CD8-positive, alpha-beta memory T cell (primary cell): ENCODE measurements at regions of chr12 and their contacts with region 1.

Region 1: DNA sequence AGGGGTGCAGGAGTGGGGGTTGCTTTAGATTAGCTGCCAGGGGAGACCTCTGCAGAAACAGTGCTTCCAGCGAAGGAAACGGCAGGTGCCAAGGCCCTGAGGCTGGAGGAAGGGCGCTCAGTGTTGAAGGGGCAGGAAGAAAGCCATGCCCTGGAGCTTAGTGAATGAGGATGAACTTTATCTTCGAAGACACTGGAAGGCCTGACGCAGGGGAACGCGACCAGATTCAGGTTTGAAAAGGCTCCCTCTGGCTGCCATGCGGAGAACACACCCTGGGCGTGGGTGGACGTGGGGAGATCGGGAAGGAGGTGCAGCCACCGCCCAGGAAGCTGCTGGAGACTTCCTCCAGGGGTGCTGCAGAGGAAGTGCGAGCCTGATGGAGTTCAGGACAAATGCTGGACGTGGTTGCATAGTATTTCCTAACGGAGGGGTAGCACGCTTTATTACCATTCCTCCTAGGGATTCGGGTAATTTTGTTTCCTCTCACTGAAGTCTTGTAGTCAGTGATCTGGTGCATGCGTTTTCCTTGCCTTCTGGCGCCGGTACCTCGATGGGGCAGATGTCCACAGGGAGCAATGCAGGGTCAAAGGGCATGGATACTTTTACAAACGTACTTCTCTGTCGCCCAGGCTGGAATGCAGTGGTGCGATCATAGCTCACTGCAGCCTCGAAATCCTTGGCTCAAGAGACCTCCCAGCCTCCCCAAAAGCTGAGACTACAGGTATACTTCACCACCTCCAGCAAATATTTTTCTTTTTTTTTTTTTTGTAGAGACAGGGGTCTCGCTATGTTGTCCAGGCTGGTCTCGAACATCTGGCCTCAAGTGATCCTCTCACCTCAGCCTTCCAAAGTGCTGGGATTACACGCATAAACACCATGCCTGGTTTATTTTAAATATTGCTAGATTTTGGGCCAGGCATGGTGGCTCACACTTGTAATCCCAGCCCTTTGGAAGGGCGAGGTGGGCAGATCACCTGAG is 26.4 kb upstream of the UBC start:
- DNase-seq: peak; percentile 71 to 88 (median 74)
- H3K4me3 ChIP-seq: peak overlapping the region; percentile 72
- H3K4me3 Mint-ChIP-seq: no peak overlapping the region
- H3K27ac ChIP-seq: peak overlapping the region; percentile 80
- H3K27ac Mint-ChIP-seq: no peak overlapping the region
- H3K4me1 ChIP-seq: peaks cover 24% of the 10 kb centered on the region
- H3K4me1 Mint-ChIP-seq: peaks cover 0 to 8% (median 4%) of the 10 kb centered on the region in 3 donors
- H3K27me3 ChIP-seq: no peaks in the 10 kb centered on the region
- H3K27me3 Mint-ChIP-seq: no peaks in the 10 kb centered on the region

Region 2: DNA sequence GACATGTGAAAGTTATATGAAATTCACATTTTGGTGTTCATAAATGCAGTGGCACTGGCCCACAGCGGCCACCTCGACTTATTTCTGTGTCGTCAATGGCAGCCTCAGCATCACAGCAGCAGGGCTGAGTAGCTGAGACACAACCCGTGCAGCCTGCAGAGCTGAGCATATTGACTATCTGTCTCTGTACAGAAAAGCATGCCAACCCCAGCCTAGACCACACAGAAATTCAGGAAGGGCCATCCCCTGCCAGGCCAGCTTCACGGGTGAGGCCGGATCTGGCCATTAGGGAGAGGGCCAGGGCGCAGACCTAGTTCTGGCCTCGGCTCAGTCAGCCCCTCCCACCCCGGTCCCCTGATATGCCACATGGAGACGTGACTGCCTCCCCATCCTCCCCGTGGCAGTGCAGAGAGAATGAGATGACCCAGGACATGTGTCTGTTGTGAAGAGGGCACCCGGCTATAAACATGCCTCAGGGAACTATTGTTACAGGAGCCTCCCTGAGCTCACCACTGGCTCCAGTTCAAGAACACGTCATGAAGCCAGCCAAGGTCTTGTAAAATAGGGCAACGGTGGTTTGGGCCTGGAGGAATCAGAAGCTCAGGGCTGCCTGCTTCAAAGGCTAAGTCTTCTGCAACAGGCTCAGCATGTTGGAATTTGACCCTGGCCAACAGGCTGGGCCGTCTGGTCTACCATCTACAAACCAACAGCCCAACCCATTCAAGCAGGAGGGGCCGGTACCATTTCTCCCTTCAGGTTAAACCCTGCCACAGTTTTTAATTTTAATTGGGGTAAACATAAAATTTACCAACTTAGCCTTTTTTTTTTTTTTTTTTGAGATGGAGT is 102.7 kb before region 1 on chr12:
- CTCF ChIA-PET with region 1: no interaction called
- POLR2A ChIA-PET with region 1: no interaction called
- DNase-seq: no peak
- H3K4me3 ChIP-seq: no peak overlapping the region
- H3K4me3 Mint-ChIP-seq: no peak overlapping the region
- H3K27ac ChIP-seq: no peak overlapping the region
- H3K27ac Mint-ChIP-seq: no peak overlapping the region
- H3K4me1 ChIP-seq: no peaks in the 10 kb centered on the region
- H3K4me1 Mint-ChIP-seq: no peaks in the 10 kb centered on the region
- H3K27me3 ChIP-seq: no peaks in the 10 kb centered on the region
- H3K27me3 Mint-ChIP-seq: peaks cover 0 to 3% of the 10 kb centered on the region in 2 donors

Region 3: DNA sequence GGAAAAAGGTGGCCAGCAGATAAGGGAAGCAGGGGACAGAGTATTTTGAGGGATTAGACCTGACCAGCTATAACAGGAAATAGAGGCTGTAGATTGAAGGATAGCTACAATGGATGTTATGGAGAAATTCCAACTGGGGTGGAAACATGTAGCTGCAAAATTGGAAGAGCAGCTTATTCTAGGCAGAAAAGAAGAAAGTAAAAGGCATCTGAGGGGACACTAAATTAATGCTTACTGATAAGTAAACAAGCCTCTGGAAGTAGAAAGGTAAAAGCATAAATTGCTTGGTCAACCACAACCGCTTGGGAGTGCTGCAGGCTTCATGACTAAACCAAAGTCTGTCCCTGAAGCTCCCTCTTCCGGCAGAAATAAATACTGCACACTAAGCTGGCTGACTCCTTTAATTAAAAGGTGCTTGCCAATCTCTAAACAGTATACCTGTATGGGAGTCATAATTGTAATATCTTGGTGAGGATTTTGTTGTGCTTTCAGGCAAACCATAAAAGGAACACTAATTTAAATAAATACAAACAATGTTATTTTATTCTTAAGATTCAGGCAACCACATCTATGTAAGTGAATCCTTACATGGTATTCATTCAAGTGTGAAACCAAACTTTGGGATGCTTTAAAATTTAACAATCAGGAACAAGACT is 34.1 kb before region 1 on chr12:
- CTCF ChIA-PET with region 1: interaction called, 711 read pairs
- POLR2A ChIA-PET with region 1: interaction called, 55 read pairs
- DNase-seq: peak; percentile 77 to 92 (median 83)
- H3K4me3 ChIP-seq: no peak overlapping the region
- H3K4me3 Mint-ChIP-seq: no peak overlapping the region
- H3K27ac ChIP-seq: no peak overlapping the region
- H3K27ac Mint-ChIP-seq: peak overlapping the region in 5 of 8 donors; percentile 7 to 92 (median 63)
- H3K4me1 ChIP-seq: peaks cover 24% of the 10 kb centered on the region
- H3K4me1 Mint-ChIP-seq: peaks cover 26 to 34% (median 33%) of the 10 kb centered on the region in 3 donors
- H3K27me3 ChIP-seq: no peaks in the 10 kb centered on the region
- H3K27me3 Mint-ChIP-seq: no peaks in the 10 kb centered on the region

Region 4: GRCh38 chr12:124917135-124917840 is 23.6 kb before region 1 on chr12:
- CTCF ChIA-PET with region 1: interaction called, 711 read pairs
- POLR2A ChIA-PET with region 1: interaction called, 224 read pairs
- DNase-seq: peak; percentile 90 to 96 (median 93)
- H3K4me3 ChIP-seq: peak overlapping the region; percentile 58
- H3K4me3 Mint-ChIP-seq: peak overlapping the region; percentile 75 to 100 (median 85)
- H3K27ac ChIP-seq: peak overlapping the region; percentile 100
- H3K27ac Mint-ChIP-seq: peak overlapping the region; percentile 85 to 99 (median 96)
- H3K4me1 ChIP-seq: peaks cover 69% of the 10 kb centered on the region
- H3K4me1 Mint-ChIP-seq: peaks cover 87 to 98% (median 93%) of the 10 kb centered on the region in 3 donors
- H3K27me3 ChIP-seq: no peaks in the 10 kb centered on the region
- H3K27me3 Mint-ChIP-seq: peaks cover 0 to 24% of the 10 kb centered on the region in 2 donors

Region 5: DNA sequence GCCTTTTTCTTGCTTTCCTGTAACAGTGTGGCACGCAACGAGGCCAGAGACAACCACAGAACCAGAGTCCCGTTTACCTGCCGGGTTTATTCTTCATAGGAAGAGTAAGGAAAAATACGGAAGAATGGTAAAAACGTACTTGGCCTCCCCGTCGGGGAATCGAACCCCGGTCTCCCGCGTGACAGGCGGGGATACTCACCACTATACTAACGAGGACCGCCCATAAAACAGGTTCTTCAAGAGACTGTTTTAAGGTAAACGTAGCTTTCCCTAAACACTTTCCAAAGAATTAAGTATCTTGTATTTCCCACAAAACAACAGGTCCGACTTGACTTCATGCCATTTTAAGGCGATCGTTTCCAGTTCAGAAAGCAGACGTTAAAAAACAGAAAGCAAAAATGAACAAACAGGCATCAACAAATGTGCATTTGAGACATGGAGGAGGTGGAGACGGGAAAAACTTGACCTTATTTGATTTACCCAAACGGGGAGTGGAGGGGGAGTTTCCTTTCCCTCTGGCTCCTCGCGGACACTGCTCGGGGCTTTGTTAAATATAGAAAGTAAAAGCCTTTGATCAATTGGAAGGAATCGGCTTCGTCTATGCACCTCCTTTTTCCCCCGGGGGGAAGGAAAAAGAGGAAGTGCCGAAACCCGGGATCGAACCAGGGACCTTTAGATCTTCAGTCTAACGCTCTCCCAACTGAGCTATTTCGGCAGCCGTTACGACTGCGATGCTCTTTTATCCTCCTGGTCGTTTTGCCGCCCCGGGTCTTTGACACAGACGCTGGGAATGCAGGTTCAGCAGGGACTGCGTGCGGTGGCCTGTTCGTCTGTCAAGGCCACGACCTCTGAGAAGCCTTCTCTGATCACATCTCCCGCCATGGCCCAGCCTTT is 13.4 kb before region 1 on chr12:
- CTCF ChIA-PET with region 1: interaction called, 711 read pairs
- POLR2A ChIA-PET with region 1: interaction called, 224 read pairs
- DNase-seq: peak; percentile 83 to 94 (median 87)
- H3K4me3 ChIP-seq: peak overlapping the region; percentile 60
- H3K4me3 Mint-ChIP-seq: peak overlapping the region; percentile 89 to 96 (median 93)
- H3K27ac ChIP-seq: peak overlapping the region; percentile 69
- H3K27ac Mint-ChIP-seq: peak overlapping the region; percentile 69 to 97 (median 96)
- H3K4me1 ChIP-seq: peaks cover 23% of the 10 kb centered on the region
- H3K4me1 Mint-ChIP-seq: peaks cover 21 to 36% (median 25%) of the 10 kb centered on the region in 3 donors
- H3K27me3 ChIP-seq: no peaks in the 10 kb centered on the region
- H3K27me3 Mint-ChIP-seq: peaks cover 0 to 10% of the 10 kb centered on the region in 2 donors

Region 6: GRCh38 chr12:124952801-124953200 is 12.0 kb after region 1 on chr12:
- CTCF ChIA-PET with region 1: interaction called, 13 read pairs
- POLR2A ChIA-PET with region 1: no interaction called
- DNase-seq: no peak
- H3K4me3 ChIP-seq: no peak overlapping the region
- H3K4me3 Mint-ChIP-seq: no peak overlapping the region
- H3K27ac ChIP-seq: no peak overlapping the region
- H3K27ac Mint-ChIP-seq: peak overlapping the region in 2 of 8 donors; percentile 42 to 64
- H3K4me1 ChIP-seq: no peaks in the 10 kb centered on the region
- H3K4me1 Mint-ChIP-seq: peaks cover 0 to 1% (median 0%) of the 10 kb centered on the region in 3 donors
- H3K27me3 ChIP-seq: no peaks in the 10 kb centered on the region
- H3K27me3 Mint-ChIP-seq: no peaks in the 10 kb centered on the region

Region 7: GRCh38 chr12:125149160-125150108 is 208.6 kb after region 1 on chr12:
- CTCF ChIA-PET with region 1: no interaction called
- POLR2A ChIA-PET with region 1: no interaction called
- DNase-seq: no peak
- H3K4me3 ChIP-seq: no peak overlapping the region
- H3K4me3 Mint-ChIP-seq: no peak overlapping the region
- H3K27ac ChIP-seq: no peak overlapping the region
- H3K27ac Mint-ChIP-seq: no peak overlapping the region
- H3K4me1 ChIP-seq: no peaks in the 10 kb centered on the region
- H3K4me1 Mint-ChIP-seq: no peaks in the 10 kb centered on the region
- H3K27me3 ChIP-seq: no peaks in the 10 kb centered on the region
- H3K27me3 Mint-ChIP-seq: peaks cover 2 to 10% of the 10 kb centered on the region in 2 donors